ENCODE measurements at regions of chr12 and their contacts with region 1.

Region 1: DNA sequence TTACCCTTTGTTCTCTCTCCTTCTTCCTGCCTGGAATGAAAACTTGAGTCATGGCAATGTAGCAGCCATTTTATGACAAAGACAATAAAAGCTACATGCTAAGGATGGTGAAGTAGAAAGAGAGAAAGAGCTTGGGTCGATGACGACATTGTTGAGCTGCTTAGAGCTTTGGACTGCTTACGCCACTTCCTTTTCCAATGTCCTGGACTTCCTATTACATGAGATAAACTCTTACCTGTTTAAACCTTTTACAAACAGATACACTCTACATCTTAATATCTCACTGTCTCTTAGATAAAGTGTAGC is 70.1 kb downstream of the PEBP1 start:
- DNase-seq: no peak
- ATAC-seq: no peak
- H3K4me3 ChIP-seq: no peak overlapping the region
- H3K27ac ChIP-seq: no peak overlapping the region
- H3K4me1 ChIP-seq: no peaks in the 10 kb centered on the region
- H3K27me3 ChIP-seq: no peaks in the 10 kb centered on the region
- CTCF ChIP-seq: no peak

Region 2: GRCh38 chr12:118164798-118165486 is 41.1 kb before region 1 on chr12:
- intact Hi-C with region 1: loop called in 1 of 10 experiments (anchors 2 kb)
- DNase-seq: no peak
- ATAC-seq: no peak
- H3K4me3 ChIP-seq: no peak overlapping the region
- H3K27ac ChIP-seq: no peak overlapping the region
- H3K4me1 ChIP-seq: no peaks in the 10 kb centered on the region
- H3K27me3 ChIP-seq: no peaks in the 10 kb centered on the region
- CTCF ChIP-seq: peak in 8 of 9 donors; percentile 18 to 60 (median 44)